BJ (cell line): ENCODE measurements at regions of chr2 and their contacts with region 1.

Region 1: GRCh38 chr2:20135631-20136050 is 84.2 kb upstream of the LAPTM4A start:
- DNase-seq: no peak
- H3K4me3 ChIP-seq: no peak overlapping the region
- H3K27me3 ChIP-seq: peaks cover 4% of the 10 kb centered on the region
- CTCF ChIP-seq: peak; percentile 94

Region 2: GRCh38 chr2:18684206-18685038 is 1451.2 kb before region 1 on chr2:
- CTCF ChIA-PET with region 1: no interaction called
- POLR2A ChIA-PET with region 1: no interaction called
- DNase-seq: peak; percentile 85
- H3K4me3 ChIP-seq: no peak overlapping the region
- H3K27me3 ChIP-seq: no peaks in the 10 kb centered on the region
- CTCF ChIP-seq: no peak

Region 3: GRCh38 chr2:20190876-20191713 is 55.5 kb after region 1 on chr2:
- CTCF ChIA-PET with region 1: interaction called, 13 read pairs
- POLR2A ChIA-PET with region 1: no interaction called
- DNase-seq: no peak
- H3K4me3 ChIP-seq: no peak overlapping the region
- H3K27me3 ChIP-seq: no peaks in the 10 kb centered on the region
- CTCF ChIP-seq: peak; percentile 60

Region 4: GRCh38 chr2:20225294-20226151 is 89.9 kb after region 1 on chr2:
- CTCF ChIA-PET with region 1: interaction called, 83 read pairs
- POLR2A ChIA-PET with region 1: interaction called, 7 read pairs
- DNase-seq: no peak
- H3K4me3 ChIP-seq: peak overlapping the region; percentile 60
- H3K27me3 ChIP-seq: no peaks in the 10 kb centered on the region
- CTCF ChIP-seq: peak; percentile 71

Region 5: GRCh38 chr2:20247084-20247483 is 111.4 kb after region 1 on chr2:
- CTCF ChIA-PET with region 1: interaction called, 11 read pairs
- POLR2A ChIA-PET with region 1: no interaction called
- DNase-seq: no peak
- H3K4me3 ChIP-seq: no peak overlapping the region
- H3K27me3 ChIP-seq: no peaks in the 10 kb centered on the region
- CTCF ChIP-seq: no peak